ENCODE measurements at regions of chr11 and their contacts with region 1.

Region 1: DNA sequence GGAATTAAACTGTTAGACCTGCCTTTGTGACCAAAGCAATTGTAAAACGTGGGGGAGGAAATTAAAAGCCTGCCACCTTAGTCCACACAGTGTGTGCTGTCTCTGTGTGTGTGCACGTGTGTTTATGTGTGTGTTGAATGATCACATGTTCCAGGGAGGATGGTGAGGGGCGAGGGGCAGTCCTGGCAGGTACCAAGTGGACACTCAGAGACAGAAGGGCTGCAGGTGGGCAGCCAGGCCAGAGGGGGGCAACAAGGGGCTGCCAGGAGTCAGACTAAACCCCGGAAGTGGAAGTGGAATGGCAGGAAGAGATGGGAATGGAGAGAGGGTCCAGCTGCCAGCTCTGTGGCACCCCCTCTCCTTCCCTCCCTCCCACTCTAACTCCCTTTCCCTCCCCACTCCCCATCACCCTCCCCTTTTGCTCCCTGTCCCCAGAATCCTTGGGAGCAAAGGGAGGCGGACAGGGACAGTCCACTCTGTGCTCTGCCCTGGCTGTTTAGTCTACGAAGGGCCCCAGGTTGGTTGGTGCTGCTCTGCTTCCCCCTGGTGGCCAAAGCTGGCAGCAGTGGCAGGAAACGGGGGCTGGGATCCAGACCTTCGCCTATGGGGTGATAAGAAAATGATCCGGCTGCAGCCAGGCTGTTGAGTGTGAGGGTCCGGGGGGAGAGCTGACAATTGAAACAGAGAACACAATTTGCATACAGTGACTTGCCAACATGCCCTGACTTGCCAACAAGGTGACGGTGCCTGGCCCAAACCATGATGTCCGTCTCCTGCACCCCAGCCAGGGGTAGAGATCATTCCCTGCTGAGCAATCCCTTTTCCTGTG is 24.4 kb downstream of the P2RY2 start:
- DNase-seq: no peak
- H3K4me3 ChIP-seq: peak overlapping the region; percentile 13; the same call in 1 of the 2 replicates
- CTCF ChIP-seq: peak; percentile 94

Region 2: GRCh38 chr11:72831513-72832300 is 410.8 kb before region 1 on chr11:
- CTCF ChIA-PET with region 1: interaction called, 61 read pairs
- POLR2A ChIA-PET with region 1: interaction called, 3 read pairs
- DNase-seq: no peak
- H3K4me3 ChIP-seq: no peak overlapping the region
- CTCF ChIP-seq: peak; percentile 97

Region 3: GRCh38 chr11:73218106-73218829 is 24.2 kb before region 1 on chr11 and contains the start of gene P2RY2:
- CTCF ChIA-PET with region 1: interaction called, 17 read pairs
- POLR2A ChIA-PET with region 1: no interaction called
- DNase-seq: no peak
- H3K4me3 ChIP-seq: peak within 1 kb of the TSS; percentile 44
- CTCF ChIP-seq: peak; percentile 62

Region 4: DNA sequence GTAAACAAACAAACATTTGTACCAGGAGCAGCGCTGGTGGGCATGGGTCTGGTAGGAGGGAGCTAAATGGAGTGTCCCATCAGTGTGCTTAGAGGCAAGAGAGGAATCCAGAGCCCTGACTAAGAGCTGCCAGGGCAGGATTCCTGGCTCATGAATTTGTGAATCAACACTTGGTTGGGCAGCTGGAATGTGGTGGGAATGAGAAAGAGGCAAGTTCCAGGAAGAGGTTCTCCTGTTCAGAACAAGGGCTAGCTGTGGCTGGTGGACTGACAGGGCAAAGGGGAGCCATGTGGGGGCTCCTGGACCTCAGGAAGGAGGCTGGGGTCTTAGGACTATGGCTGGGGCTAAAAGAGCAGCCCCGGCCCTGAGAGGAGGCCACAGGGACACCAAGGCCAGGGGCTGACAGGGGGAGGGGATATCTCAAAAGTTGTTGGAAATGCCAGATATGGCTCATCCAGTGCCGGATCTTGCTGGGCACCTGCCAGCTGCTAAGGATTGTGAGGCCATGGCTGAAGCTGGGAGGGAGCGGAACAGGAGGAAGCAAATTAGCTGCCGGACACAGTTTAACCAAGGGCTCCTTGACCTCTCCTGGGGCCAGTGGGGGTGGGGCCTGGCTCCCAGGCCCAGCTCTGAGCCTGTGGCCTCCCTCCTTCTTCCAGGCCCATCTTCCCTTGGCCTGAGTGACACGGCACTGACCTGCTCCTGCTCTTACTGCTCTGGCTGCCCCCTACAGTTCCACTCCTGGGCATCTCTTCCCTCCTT is 15.1 kb after region 1 on chr11:
- CTCF ChIA-PET with region 1: interaction called, 31 read pairs
- POLR2A ChIA-PET with region 1: interaction called, 3 read pairs
- DNase-seq: peak; percentile 93
- H3K4me3 ChIP-seq: peak overlapping the region; percentile 6; the same call in 1 of the 2 replicates
- CTCF ChIP-seq: no peak

Region 5: DNA sequence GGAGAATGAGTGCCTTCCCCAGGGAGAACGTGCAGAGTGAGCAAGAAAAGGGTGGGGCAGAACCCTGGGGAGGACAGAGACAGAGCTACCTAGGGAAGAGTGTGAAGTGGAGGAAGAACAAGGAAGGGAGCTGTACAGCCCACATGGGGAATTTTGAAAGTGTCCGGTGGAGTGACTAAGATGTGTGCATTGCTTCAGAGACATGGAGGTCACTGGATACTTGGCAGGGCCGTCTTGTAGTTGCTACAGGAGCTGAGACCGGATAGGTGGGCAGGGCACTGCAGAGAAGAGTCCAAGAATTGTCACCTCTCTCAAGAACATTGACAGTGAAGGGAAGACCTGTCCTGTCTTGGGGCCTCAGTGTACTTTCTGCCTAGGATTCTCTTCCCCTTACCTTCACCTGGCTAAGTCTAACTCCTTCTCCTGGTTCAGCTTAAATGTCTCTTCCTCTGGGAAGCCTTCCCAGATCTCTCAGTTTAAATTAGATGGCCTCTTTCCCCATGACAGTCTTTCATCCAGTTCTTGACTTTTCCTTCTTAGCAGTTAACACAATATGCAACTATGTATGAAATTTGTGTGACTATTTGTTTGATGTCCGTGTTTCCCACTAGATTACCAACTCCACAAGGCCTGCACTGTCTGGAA is 20.5 kb after region 1 on chr11:
- CTCF ChIA-PET with region 1: interaction called, 31 read pairs
- POLR2A ChIA-PET with region 1: interaction called, 3 read pairs
- DNase-seq: no peak
- H3K4me3 ChIP-seq: no peak overlapping the region
- CTCF ChIP-seq: no peak

Measured in AG04449 (cell line).